CD4-positive, alpha-beta T cell (primary cell): ENCODE measurements at regions of chr7 and their contacts with region 1.

Region 1: DNA sequence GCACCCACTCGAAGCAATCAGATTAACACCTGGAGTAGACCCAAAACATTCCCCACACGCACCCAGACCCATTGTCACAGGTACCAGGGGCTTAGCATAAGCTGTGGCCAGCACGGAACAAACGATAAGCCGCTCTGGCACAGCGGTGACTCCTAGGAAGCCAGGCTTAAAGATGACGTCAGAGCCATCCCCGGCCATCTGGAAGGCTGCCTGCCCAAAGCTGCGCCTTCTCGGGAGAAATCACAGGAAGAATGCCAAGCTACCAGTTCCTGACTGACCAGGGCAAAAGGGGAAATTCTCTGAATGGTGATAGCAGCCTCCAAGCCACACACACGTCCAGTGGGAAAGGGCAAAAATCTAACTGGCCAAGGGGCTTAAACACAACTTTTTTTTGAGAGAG is 13.0 kb upstream of the WIPI2 start:
- DNase-seq: no peak
- ATAC-seq: no peak
- H3K4me3 ChIP-seq: no peak overlapping the region
- H3K4me3 Mint-ChIP-seq: no peak overlapping the region
- H3K27ac ChIP-seq: no peak overlapping the region
- H3K27ac Mint-ChIP-seq: no peak overlapping the region
- H3K4me1 ChIP-seq: peaks cover 6% of the 10 kb centered on the region
- H3K4me1 Mint-ChIP-seq: no peaks in the 10 kb centered on the region
- H3K27me3 ChIP-seq: no peaks in the 10 kb centered on the region
- H3K27me3 Mint-ChIP-seq: no peaks in the 10 kb centered on the region
- CTCF ChIP-seq: no peak

Region 2: DNA sequence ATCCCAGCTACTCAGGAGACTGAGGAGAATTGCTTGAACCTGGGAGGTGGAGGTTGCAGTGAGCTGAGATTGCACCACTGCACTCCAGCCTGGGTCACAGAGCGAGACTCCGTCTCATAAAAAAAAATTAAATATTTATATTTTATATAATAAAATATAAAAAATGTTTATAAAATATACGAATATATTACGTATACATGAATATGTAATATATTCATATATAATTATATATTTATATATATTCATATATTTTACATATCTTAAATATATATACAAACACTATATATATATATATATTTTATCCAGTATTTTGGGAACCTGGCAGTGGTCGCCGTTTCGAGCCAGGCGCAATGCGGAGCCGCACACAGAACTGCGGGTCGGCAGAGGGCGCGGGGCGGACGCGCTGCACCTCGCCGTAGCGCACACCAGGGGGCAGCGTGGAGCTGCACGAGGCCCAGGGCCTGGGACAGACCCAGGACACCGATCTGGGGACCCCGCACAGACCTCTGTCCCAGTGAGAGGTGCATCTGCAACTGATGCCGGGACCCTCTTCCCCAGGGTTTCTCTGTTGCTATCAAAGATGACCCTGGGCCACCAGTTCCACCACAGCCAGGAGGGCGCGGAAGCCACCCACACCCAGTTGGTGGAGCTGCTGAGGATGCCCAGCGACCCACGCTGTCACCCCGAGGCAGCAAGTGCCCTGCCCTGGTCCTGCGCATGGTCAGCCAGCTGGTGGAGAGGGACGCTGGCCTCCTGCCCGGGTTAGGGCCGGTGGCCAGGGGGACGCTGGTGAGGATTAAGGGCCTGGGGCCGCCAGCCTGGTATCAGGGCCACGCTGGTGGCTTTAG is 379.0 kb before region 1 on chr7:
- CTCF ChIA-PET with region 1: no interaction called
- POLR2A ChIA-PET with region 1: no interaction called
- intact Hi-C with region 1: loop called in 1 of 2 experiments (anchors 2 kb)
- DNase-seq: peak in 13 of 14 experiments; percentile 45 to 83 (median 56)
- ATAC-seq: peak; percentile 96
- H3K4me3 ChIP-seq: no peak overlapping the region
- H3K4me3 Mint-ChIP-seq: no peak overlapping the region
- H3K27ac ChIP-seq: no peak overlapping the region
- H3K27ac Mint-ChIP-seq: no peak overlapping the region
- H3K4me1 ChIP-seq: peaks cover 4% of the 10 kb centered on the region
- H3K4me1 Mint-ChIP-seq: no peaks in the 10 kb centered on the region
- H3K27me3 ChIP-seq: no peaks in the 10 kb centered on the region
- H3K27me3 Mint-ChIP-seq: no peaks in the 10 kb centered on the region
- CTCF ChIP-seq: peak; percentile 94

Region 3: DNA sequence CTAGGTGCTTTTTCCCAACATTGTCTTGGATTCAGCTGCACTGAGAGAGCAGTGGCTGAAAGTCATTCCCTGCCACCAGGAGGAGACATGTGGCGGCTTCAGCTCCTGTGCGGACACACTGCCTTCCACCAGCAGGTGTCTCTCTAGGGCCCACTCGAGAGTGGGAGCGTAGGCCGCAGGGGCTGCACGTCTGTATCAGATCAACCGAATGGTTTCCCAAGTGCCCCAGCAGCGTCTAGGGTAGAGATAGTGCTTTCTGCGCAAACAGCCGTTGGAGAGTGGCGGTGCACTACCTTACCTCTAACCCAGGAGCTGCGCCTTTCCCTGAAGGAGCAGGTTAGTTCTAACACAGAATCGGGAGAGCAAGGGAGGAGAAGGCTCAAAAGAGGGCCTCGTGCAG is 346.9 kb before region 1 on chr7:
- CTCF ChIA-PET with region 1: no interaction called
- POLR2A ChIA-PET with region 1: no interaction called
- intact Hi-C with region 1: loop called in 1 of 2 experiments (anchors 1 kb)
- DNase-seq: peak; percentile 18 to 77 (median 42)
- ATAC-seq: peak; percentile 89
- H3K4me3 ChIP-seq: no peak overlapping the region
- H3K4me3 Mint-ChIP-seq: no peak overlapping the region
- H3K27ac ChIP-seq: no peak overlapping the region
- H3K27ac Mint-ChIP-seq: no peak overlapping the region
- H3K4me1 ChIP-seq: peaks cover 4% of the 10 kb centered on the region
- H3K4me1 Mint-ChIP-seq: peaks cover 5% of the 10 kb centered on the region
- H3K27me3 ChIP-seq: no peaks in the 10 kb centered on the region
- H3K27me3 Mint-ChIP-seq: peaks cover 3% of the 10 kb centered on the region
- CTCF ChIP-seq: peak; percentile 71

Region 4: DNA sequence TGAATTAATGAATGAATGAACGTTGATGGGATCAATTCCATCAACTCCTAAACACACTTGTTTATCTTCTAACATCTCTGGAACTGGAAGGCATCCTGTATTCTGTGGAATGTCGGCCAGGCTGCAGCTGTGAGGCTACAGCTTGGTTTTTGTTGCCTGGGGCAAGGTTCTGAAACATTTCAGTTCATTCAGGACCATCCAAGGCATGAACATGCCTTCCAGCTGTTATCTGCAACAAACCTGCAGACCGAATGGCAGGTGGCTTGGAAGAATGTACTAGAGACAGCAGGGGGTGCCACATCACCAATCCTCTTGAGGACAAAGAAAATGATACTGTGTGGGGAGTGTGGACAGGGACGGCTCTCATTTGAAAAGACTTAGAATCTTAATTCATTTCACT is 327.7 kb before region 1 on chr7:
- CTCF ChIA-PET with region 1: no interaction called
- POLR2A ChIA-PET with region 1: no interaction called
- intact Hi-C with region 1: loop called in 1 of 2 experiments (anchors 5 kb)
- DNase-seq: peak in 4 of 14 experiments; percentile 23 to 45 (median 32)
- ATAC-seq: no peak
- H3K4me3 ChIP-seq: no peak overlapping the region
- H3K4me3 Mint-ChIP-seq: no peak overlapping the region
- H3K27ac ChIP-seq: no peak overlapping the region
- H3K27ac Mint-ChIP-seq: no peak overlapping the region
- H3K4me1 ChIP-seq: peaks cover 4% of the 10 kb centered on the region
- H3K4me1 Mint-ChIP-seq: no peaks in the 10 kb centered on the region
- H3K27me3 ChIP-seq: peaks cover 5 to 8% of the 10 kb centered on the region in 2 experiments
- H3K27me3 Mint-ChIP-seq: peaks cover 13% of the 10 kb centered on the region
- CTCF ChIP-seq: peak; percentile 27

Region 5: GRCh38 chr7:5088906-5089305 is 88.2 kb before region 1 on chr7:
- CTCF ChIA-PET with region 1: no interaction called
- POLR2A ChIA-PET with region 1: interaction called, 3 read pairs
- intact Hi-C with region 1: loop called in 1 of 2 experiments (anchors 5 kb)
- DNase-seq: no peak
- ATAC-seq: no peak
- H3K4me3 ChIP-seq: no peak overlapping the region
- H3K4me3 Mint-ChIP-seq: no peak overlapping the region
- H3K27ac ChIP-seq: no peak overlapping the region
- H3K27ac Mint-ChIP-seq: no peak overlapping the region
- H3K4me1 ChIP-seq: peaks cover 6% of the 10 kb centered on the region
- H3K4me1 Mint-ChIP-seq: no peaks in the 10 kb centered on the region
- H3K27me3 ChIP-seq: peaks cover 0 to 7% of the 10 kb centered on the region in 2 experiments
- H3K27me3 Mint-ChIP-seq: no peaks in the 10 kb centered on the region
- CTCF ChIP-seq: no peak